Left ventricle myocardium superior (tissue), 1 donor: ENCODE measurements at regions of chr18 and their contacts with region 1.

Region 1: GRCh38 chr18:35756506-35757117 is 175.1 kb downstream of the GALNT1 start:
- DNase-seq: no peak
- ATAC-seq: peak; percentile 78

Region 2: DNA sequence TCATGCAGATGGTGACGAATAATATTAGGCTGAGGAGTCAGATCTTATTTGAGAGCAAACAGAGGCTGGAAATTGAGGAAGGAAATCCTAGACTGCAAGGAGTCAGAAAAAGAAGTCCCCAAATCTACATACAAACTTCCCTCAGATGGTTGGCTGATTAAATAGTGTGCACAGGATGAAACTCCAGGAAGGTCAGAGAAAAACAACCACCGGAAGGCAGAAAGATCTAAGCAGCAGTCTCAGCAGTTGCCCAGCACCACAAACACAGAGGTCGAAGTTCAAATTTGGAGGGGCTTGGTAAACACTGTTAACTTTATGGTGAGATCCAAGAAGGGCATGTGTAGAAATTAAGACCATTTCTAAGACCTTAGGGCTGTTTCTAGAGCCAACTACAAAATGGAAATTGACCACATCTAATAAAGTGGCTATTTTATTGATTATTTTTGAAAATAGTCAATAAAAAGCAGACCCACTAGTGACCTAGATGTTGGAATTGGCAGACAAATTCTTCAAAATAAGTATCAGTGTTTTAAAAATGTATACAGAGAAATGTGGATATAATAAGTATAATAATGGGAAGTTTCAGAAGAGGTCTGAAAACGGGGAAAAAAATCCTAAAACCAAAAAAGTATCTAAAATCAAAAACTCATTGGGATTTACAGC is 40.3 kb before region 1 on chr18:
- intact Hi-C with region 1: no loop called
- DNase-seq: no peak
- ATAC-seq: no peak

Region 3: DNA sequence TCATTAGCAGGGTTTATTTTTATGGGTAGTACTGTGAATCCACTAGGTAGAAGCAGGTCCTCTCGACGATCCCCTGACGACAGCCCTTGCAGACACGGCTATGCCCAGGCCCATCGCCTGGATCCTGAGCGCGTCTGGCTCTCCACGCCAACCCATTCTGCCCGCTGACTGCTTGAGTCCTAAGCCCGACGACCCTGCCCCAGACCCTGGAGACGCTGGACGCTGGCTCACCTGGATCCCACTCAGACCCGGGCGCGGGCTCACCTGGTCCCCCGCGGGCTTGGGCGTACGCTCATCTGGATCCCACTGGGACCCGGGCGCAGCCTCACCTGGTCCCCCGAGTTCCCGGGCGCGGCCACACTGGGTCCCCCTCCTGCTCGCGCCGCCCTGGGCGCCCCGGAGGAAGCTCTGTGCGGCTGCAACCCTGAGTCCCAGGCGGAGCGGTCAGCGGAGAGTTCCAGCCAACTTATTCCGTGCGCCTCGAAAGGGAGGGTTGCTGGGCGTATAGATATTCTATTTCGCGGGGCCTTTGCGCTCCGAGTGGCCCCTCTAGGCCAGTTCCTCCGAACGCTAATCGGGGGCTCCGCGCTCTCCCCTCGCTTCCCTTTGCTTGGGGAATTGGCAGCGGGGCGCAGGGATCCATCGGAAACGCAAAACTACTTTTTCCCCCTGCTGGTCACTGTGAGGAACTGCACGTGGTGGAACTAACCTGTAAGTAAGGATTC is 193.5 kb after region 1 on chr18:
- intact Hi-C with region 1: loop called (anchors 1 kb)
- DNase-seq: peak; percentile 66
- ATAC-seq: peak; percentile 90